Calu3 (cell line): ENCODE measurements at regions of chr1 and their contacts with region 1.

Region 1: GRCh38 chr1:167268398-167268787 is 47.7 kb downstream of the POU2F1 start:
- DNase-seq: no peak
- H3K4me3 Mint-ChIP-seq: no peak overlapping the region
- H3K27ac Mint-ChIP-seq: no peak overlapping the region
- H3K4me1 Mint-ChIP-seq: peaks cover 6% of the 10 kb centered on the region
- H3K27me3 Mint-ChIP-seq: no peaks in the 10 kb centered on the region
- CTCF ChIP-seq: no peak

Region 2: GRCh38 chr1:167342846-167343245 is 74.5 kb after region 1 on chr1:
- CTCF ChIA-PET with region 1: interaction called, 21 read pairs
- intact Hi-C with region 1: loop called (anchors 1 kb)
- DNase-seq: no peak
- H3K4me3 Mint-ChIP-seq: no peak overlapping the region
- H3K27ac Mint-ChIP-seq: no peak overlapping the region
- H3K4me1 Mint-ChIP-seq: no peaks in the 10 kb centered on the region
- H3K27me3 Mint-ChIP-seq: no peaks in the 10 kb centered on the region
- CTCF ChIP-seq: no peak

Region 3: DNA sequence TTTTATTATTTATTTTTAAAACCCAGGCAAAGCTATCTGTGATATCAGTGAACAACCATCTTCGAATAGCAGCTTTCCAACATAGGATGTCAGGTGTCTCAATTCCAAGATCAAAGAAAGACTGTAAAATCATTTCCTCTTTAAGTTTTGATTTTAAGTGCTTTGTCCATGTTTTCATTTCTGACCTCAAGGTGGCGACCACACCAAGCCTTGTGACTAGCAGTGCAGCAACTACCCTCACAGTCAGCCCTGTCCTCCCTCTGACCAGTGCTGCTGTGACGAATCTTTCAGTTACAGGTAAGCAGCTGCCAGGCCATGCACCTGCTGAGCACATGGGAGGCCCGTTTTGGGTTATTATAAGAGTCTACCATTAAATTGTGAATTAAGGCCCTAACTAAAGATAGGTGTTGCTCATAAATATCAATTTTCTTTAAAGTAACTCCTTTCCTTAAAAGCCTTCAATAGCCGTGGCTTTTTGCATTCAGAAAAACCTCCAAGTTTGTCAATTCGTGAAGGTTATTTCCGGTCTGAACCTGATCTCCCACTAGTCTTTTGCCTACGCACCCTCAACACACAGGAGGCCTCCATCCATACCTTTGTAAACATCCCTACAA is 133.0 kb after region 1 on chr1:
- CTCF ChIA-PET with region 1: interaction called, 3 read pairs
- intact Hi-C with region 1: loop called (anchors 2 kb)
- DNase-seq: peak; percentile 73
- H3K4me3 Mint-ChIP-seq: no peak overlapping the region
- H3K27ac Mint-ChIP-seq: no peak overlapping the region
- H3K4me1 Mint-ChIP-seq: peaks cover 7% of the 10 kb centered on the region
- H3K27me3 Mint-ChIP-seq: no peaks in the 10 kb centered on the region
- CTCF ChIP-seq: peak; percentile 49